Mammary epithelial cell (primary cell): ENCODE measurements at regions of chr11 and their contacts with region 1.

Region 1: GRCh38 chr11:65879617-65880016 is at the start of gene CTSW:
- DNase-seq: no peak
- H3K4me3 ChIP-seq: no peak within 1 kb of the TSS
- H3K27ac ChIP-seq: no peak within 1 kb of the TSS
- H3K4me1 ChIP-seq: peaks cover 6% of the 10 kb centered on the region
- H3K27me3 ChIP-seq: no peaks in the 10 kb centered on the region
- CTCF ChIP-seq: no peak
- total RNA-seq, gene CTSW: not detected

Region 2: DNA sequence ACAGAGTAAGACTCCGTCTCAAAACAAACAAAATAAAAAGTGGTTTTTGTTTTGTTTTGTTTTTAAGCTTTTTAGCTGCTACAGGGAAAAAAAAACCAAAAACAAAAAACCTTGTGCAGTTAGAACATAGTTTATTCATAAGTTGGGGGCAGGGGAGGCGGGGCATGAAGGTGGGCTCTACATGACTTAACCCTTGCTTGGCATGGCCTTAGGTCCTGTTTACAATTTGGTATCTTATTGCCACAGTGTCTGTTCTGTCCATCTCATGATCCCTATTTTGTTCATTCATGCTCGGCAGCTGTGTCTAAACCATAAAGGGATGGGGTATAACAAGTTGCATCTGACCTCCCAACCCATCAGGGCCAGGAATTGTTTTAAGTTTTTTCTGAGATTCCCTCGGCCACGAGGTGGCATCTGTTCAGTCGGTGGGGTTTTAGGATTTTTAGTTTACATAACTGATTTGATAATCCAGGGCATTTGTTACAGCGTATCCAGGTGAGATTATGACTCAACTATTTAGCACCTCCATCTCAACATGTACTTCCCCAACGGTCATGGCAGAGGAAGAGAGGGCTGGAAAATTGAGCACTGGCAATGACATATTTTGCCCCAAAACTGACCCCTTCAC is 105.7 kb before region 1 on chr11:
- CTCF ChIA-PET with region 1: no interaction called
- dilution Hi-C with region 1: loop called (anchors 5 kb)
- in situ Hi-C with region 1: no loop called
- intact Hi-C with region 1: no loop called
- DNase-seq: peak; percentile 38
- H3K4me3 ChIP-seq: no peak overlapping the region
- H3K27ac ChIP-seq: no peak overlapping the region
- H3K4me1 ChIP-seq: peaks cover 15% of the 10 kb centered on the region
- H3K27me3 ChIP-seq: no peaks in the 10 kb centered on the region
- CTCF ChIP-seq: peak; percentile 19 to 37

Region 3: GRCh38 chr11:65817835-65818742 is 61.5 kb before region 1 on chr11:
- CTCF ChIA-PET with region 1: no interaction called
- dilution Hi-C with region 1: no loop called
- in situ Hi-C with region 1: no loop called
- intact Hi-C with region 1: no loop called
- DNase-seq: peak; percentile 82
- H3K4me3 ChIP-seq: peak overlapping the region; percentile 61 to 70 (median 64)
- H3K27ac ChIP-seq: peak overlapping the region; percentile 85
- H3K4me1 ChIP-seq: peaks cover 7% of the 10 kb centered on the region
- H3K27me3 ChIP-seq: no peaks in the 10 kb centered on the region
- CTCF ChIP-seq: peak; percentile 88 to 97

Region 4: DNA sequence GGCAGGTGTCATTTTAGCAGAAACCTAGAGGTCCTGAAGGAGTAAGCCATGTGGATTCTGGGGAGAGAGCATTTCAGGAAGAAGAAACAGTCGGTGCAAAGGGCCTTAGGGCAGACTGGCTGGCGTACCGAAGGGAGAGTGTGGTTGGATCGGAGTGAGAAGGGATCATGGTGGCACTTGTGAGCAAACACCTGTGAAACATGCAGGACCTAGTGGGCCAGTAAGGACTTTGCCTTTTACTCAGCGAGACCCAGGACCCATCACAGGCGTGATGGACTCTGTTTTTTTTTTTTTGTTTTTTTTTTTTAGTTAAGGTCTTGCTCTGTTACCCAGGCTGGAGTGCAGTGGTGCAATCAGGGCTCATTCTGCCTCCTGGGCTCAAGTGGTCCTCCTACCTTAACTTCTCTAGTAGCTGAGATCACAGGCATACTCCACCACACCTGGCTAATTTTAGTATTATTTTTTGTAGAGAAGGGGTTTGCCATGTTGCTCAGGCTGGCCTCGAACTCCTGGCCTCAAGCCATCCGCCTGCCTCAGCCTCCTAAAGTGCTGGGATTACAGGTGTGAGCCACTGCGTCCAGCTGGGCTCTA is 62.2 kb after region 1 on chr11:
- CTCF ChIA-PET with region 1: no interaction called
- dilution Hi-C with region 1: loop called (anchors 5 kb)
- in situ Hi-C with region 1: no loop called
- intact Hi-C with region 1: no loop called
- DNase-seq: no peak
- H3K4me3 ChIP-seq: no peak overlapping the region
- H3K27ac ChIP-seq: no peak overlapping the region
- H3K4me1 ChIP-seq: peaks cover 12% of the 10 kb centered on the region
- H3K27me3 ChIP-seq: no peaks in the 10 kb centered on the region
- CTCF ChIP-seq: no peak